ENCODE measurements at regions of chr14 and their contacts with region 1.

Region 1: GRCh38 chr14:23269193-23269592 is 16.7 kb downstream of the HOMEZ start:
- DNase-seq: no peak
- H3K4me3 ChIP-seq: no peak overlapping the region
- H3K27ac ChIP-seq: no peak overlapping the region
- H3K4me1 ChIP-seq: no peaks in the 10 kb centered on the region
- H3K27me3 ChIP-seq: no peaks in the 10 kb centered on the region
- CTCF ChIP-seq: no peak
- POLR2A ChIP-seq: no peak

Region 2: GRCh38 chr14:23320774-23321571 is 51.8 kb after region 1 on chr14 and contains the start of gene PABPN1:
- intact Hi-C with region 1: loop called in 1 of 2 experiments (anchors 10 kb)
- DNase-seq: peak; percentile 99 to 100 (median 100)
- H3K4me3 ChIP-seq: peak within 1 kb of the TSS in 3 of 4 donors; percentile 19 to 86 (median 72)
- H3K27ac ChIP-seq: peak within 1 kb of the TSS; percentile 76 to 99 (median 90)
- H3K4me1 ChIP-seq: peaks cover 19 to 30% of the 10 kb centered on the region in 2 donors
- H3K27me3 ChIP-seq: no peaks in the 10 kb centered on the region
- CTCF ChIP-seq: no peak
- POLR2A ChIP-seq: peak; percentile 63 to 87
- total RNA-seq, gene PABPN1: 18.3 to 200 (median 79.3) TPM

Region 3: GRCh38 chr14:23379366-23380196 is 110.4 kb after region 1 on chr14:
- intact Hi-C with region 1: loop called in 1 of 2 experiments (anchors 5 kb)
- DNase-seq: peak; percentile 33 to 63 (median 49)
- H3K4me3 ChIP-seq: no peak overlapping the region
- H3K27ac ChIP-seq: no peak overlapping the region
- H3K4me1 ChIP-seq: no peaks in the 10 kb centered on the region
- H3K27me3 ChIP-seq: no peaks in the 10 kb centered on the region
- CTCF ChIP-seq: peak; percentile 68 to 87 (median 80)
- POLR2A ChIP-seq: no peak